Transverse colon (tissue), 4 donors: ENCODE measurements at regions of chr15 and their contacts with region 1.

Region 1: GRCh38 chr15:42447599-42447998 is 43.3 kb downstream of the ZNF106 start:
- DNase-seq: no peak
- H3K4me3 ChIP-seq: no peak overlapping the region
- H3K27ac ChIP-seq: no peak overlapping the region
- H3K4me1 ChIP-seq: no peaks in the 10 kb centered on the region
- H3K27me3 ChIP-seq: no peaks in the 10 kb centered on the region
- CTCF ChIP-seq: no peak
- EP300 ChIP-seq: no peak
- POLR2A ChIP-seq: no peak

Region 2: DNA sequence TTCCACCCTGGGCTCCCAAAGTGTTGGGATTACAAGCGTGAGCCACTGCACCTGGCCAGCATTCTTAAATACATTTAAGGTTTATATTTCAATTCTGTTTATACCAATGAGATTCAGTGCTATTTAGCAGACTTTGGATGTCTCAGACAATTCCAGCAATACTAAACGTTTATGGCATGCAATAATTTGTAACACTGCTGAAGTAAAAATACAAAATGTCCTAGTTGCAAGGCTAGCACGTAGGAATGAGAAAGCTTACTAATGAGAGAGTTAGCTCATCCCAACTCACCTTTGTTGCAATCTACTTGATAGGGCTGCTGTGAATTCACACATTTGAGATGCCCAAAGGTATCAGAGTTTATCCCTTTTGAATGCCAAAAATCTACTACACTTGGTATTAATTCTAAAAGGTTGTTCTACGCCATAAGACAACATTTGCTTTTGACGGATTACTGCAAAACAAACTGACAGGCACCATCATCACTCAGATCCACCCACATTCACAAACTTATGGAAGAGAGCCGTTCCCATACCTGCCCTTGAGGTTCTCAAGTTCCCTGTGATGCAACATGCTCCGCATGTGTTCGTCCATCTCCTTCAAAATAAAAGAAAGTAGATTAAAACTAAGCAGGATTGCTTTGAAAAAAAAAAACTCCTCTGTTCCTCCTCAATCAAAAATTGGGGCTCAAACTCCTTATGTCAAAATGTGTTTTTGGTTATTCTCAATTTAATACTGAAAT is 18.1 kb after region 1 on chr15:
- in situ Hi-C with region 1: no loop called
- intact Hi-C with region 1: loop called (anchors 1 kb)
- DNase-seq: no peak
- H3K4me3 ChIP-seq: no peak overlapping the region
- H3K27ac ChIP-seq: peak overlapping the region in 3 of 4 donors; percentile 3 to 50 (median 46)
- H3K4me1 ChIP-seq: peaks cover 0 to 12% (median 5%) of the 10 kb centered on the region in 4 donors
- H3K27me3 ChIP-seq: no peaks in the 10 kb centered on the region
- CTCF ChIP-seq: no peak
- EP300 ChIP-seq: no peak
- POLR2A ChIP-seq: no peak

Region 3: DNA sequence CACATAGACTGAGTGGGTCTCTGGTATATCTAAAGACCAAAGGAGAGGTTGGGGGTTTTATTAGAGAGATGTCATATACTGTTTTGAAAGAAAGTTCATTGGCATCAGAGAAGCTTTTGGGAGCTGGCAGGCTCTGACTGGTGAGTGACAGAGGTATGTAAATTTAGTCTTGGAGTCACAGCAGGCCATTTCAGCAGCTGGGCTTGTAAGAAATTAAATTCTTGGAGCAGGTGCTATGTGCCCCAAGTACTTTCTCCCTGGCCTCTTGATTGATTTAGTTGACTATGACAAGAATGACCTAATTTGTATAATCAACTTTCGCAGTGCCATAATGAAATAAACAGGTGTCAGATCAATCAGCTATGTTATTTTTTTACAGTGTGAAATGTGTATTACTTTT is 337.1 kb after region 1 on chr15:
- in situ Hi-C with region 1: no loop called
- intact Hi-C with region 1: no loop called
- DNase-seq: no peak
- H3K4me3 ChIP-seq: no peak overlapping the region
- H3K27ac ChIP-seq: no peak overlapping the region
- H3K4me1 ChIP-seq: no peaks in the 10 kb centered on the region
- H3K27me3 ChIP-seq: no peaks in the 10 kb centered on the region
- CTCF ChIP-seq: no peak
- EP300 ChIP-seq: no peak
- POLR2A ChIP-seq: no peak

Region 4: GRCh38 chr15:43881944-43882343 is 1434.3 kb after region 1 on chr15:
- in situ Hi-C with region 1: no loop called
- intact Hi-C with region 1: no loop called
- DNase-seq: no peak
- H3K4me3 ChIP-seq: no peak overlapping the region
- H3K27ac ChIP-seq: no peak overlapping the region
- H3K4me1 ChIP-seq: no peaks in the 10 kb centered on the region
- H3K27me3 ChIP-seq: no peaks in the 10 kb centered on the region
- CTCF ChIP-seq: peak in 2 of 5 experiments; percentile 32
- EP300 ChIP-seq: no peak
- POLR2A ChIP-seq: no peak